Ascending aorta (tissue), 2 donors: ENCODE measurements at regions of chr10 and their contacts with region 1.

Region 1: GRCh38 chr10:70880077-70880534 is 8.3 kb downstream of the PCBD1 start:
- DNase-seq: peak; percentile 48 to 87
- H3K4me3 ChIP-seq: no peak overlapping the region
- H3K27ac ChIP-seq: no peak overlapping the region
- H3K4me1 ChIP-seq: no peaks in the 10 kb centered on the region
- H3K27me3 ChIP-seq: no peaks in the 10 kb centered on the region
- CTCF ChIP-seq: peak; percentile 83 to 88 (median 85)

Region 2: GRCh38 chr10:70227548-70228320 is 652.4 kb before region 1 on chr10:
- intact Hi-C with region 1: loop called (anchors 10 kb)
- DNase-seq: no peak
- H3K4me3 ChIP-seq: no peak overlapping the region
- H3K27ac ChIP-seq: peak overlapping the region in 1 of 2 donors; percentile 1
- H3K4me1 ChIP-seq: peaks cover 0 to 9% of the 10 kb centered on the region in 2 donors
- H3K27me3 ChIP-seq: no peaks in the 10 kb centered on the region
- CTCF ChIP-seq: no peak

Region 3: GRCh38 chr10:70549962-70550458 is 330.1 kb before region 1 on chr10:
- intact Hi-C with region 1: loop called (anchors 5 kb)
- DNase-seq: peak in 1 of 2 donors; percentile 82
- H3K4me3 ChIP-seq: no peak overlapping the region
- H3K27ac ChIP-seq: no peak overlapping the region
- H3K4me1 ChIP-seq: no peaks in the 10 kb centered on the region
- H3K27me3 ChIP-seq: no peaks in the 10 kb centered on the region
- CTCF ChIP-seq: peak; percentile 79 to 90 (median 80)

Region 4: GRCh38 chr10:70832852-70833528 is 47.1 kb before region 1 on chr10:
- intact Hi-C with region 1: no loop called
- DNase-seq: no peak
- H3K4me3 ChIP-seq: no peak overlapping the region
- H3K27ac ChIP-seq: peak overlapping the region in 1 of 2 donors; percentile 30
- H3K4me1 ChIP-seq: no peaks in the 10 kb centered on the region
- H3K27me3 ChIP-seq: no peaks in the 10 kb centered on the region
- CTCF ChIP-seq: no peak